Posterior cingulate gyrus (tissue), 11 donors: ENCODE measurements at regions of chr16 and their contacts with region 1.

Region 1: GRCh38 chr16:71456801-71457200 is 5.2 kb downstream of the ZNF23 start:
- DNase-seq: no peak

Region 2: GRCh38 chr16:71499775-71500364 is 43.1 kb after region 1 on chr16:
- intact Hi-C with region 1: loop called (anchors 5 kb)
- DNase-seq: peak in 4 of 10 donors; percentile 22 to 37 (median 26)